ENCODE measurements at regions of chr1 and their contacts with region 1.

Region 1: DNA sequence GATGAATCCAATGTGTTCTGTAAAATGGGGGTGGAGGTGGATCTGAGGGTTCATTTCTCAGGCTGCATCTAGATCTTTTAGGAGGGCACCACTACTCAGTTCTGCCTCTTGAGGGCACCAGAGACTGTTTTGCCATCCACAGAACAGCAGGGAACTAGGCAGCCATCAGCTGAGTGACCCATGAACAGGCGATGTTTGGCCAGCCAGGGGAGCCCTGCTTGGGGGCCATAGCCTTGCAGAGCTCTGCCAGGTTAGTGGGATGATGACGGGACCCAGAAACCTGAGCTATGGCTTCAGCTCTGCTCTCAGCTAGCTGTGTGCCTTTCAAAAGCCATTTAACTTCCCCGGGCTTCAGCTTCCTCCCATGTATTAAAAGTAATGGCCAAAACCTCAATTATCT is 13.4 kb upstream of the NOS1AP start:
- DNase-seq: peak; percentile 85
- ATAC-seq: peak; percentile 99
- H3K4me3 Mint-ChIP-seq: no peak overlapping the region
- H3K27ac Mint-ChIP-seq: no peak overlapping the region
- H3K4me1 Mint-ChIP-seq: peaks cover 4% of the 10 kb centered on the region; the same call in 1 of the 2 replicates
- H3K27me3 Mint-ChIP-seq: peaks cover 7% of the 10 kb centered on the region; the same call in 1 of the 2 replicates
- CTCF ChIP-seq: peak; percentile 75

Region 2: DNA sequence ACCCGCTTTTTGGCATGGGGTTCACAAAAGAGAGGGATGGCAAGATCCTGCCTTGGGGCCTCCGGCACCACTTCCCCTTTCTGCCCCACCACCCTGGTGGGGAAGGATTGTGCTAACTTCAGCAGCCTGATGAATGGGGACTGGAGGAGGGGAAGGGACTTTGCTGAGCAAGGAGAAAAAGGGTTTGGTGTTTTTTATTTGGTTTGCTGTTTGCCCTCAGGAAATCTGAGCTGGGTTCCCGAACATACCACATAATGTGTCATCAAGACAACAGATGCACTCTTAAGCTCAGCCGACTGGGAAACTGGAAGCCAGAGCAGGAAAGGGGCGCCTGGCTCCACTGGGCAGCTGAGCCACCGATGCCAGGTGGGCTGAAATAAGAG is 52.2 kb before region 1 on chr1:
- CTCF ChIA-PET with region 1: no interaction called
- POLR2A ChIA-PET with region 1: no interaction called
- DNase-seq: no peak
- ATAC-seq: peak; percentile 47; the same call in 1 of the 2 replicates
- H3K4me3 Mint-ChIP-seq: no peak overlapping the region
- H3K27ac Mint-ChIP-seq: no peak overlapping the region
- H3K4me1 Mint-ChIP-seq: peaks cover 17% of the 10 kb centered on the region
- H3K27me3 Mint-ChIP-seq: no peaks in the 10 kb centered on the region
- CTCF ChIP-seq: no peak

Region 3: DNA sequence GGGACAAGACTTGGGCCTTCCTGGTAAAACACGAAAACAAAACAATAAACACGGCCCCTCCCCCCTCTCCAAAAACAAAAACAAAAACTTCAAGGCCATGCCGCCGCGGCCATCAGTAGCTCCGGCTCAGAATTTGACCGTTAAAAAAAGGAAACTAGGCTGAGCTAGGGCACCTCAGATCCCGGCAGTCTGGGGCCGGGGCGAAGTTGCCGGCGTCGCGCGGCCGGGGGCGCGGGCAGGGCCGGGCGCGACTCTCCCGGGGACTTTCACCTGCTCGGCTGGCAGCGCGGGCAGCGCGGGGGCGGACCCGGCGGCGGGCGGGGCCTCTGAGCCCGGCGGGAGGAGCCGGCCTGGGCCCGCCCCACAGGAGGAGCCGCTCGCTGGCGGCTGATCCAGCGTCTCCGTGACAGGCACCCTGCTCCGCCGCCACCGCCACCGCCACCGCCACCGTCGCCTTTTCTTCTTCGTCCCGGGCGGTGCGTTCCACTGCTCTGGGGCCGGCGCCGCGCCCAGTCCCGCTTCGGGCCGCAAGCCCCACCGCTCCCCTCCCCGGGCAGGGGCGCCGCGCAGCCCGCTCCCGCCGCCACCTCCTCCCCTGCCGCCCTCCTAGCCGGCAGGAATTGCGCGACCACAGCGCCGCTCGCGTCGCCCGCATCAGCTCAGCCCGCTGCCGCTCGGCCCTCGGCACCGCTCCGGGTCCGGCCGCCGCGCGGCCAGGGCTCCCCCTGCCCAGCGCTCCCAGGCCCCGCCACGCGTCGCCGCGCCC is 13.5 kb after region 1 on chr1 and contains the start of gene NOS1AP:
- CTCF ChIA-PET with region 1: interaction called, 23 read pairs
- POLR2A ChIA-PET with region 1: interaction called, 4 read pairs
- DNase-seq: peak; percentile 86
- ATAC-seq: peak; percentile 87
- H3K4me3 Mint-ChIP-seq: peak within 1 kb of the TSS; percentile 71
- H3K27ac Mint-ChIP-seq: peak within 1 kb of the TSS; percentile 49
- H3K4me1 Mint-ChIP-seq: peaks cover 47% of the 10 kb centered on the region
- H3K27me3 Mint-ChIP-seq: no peaks in the 10 kb centered on the region; the same call in none of the 2 replicates
- CTCF ChIP-seq: no peak
- total RNA-seq, gene NOS1AP: 10.0 to 14.7 TPM (median 10.2 TPM) in 3 replicates

Region 4: GRCh38 chr1:162213281-162213912 is 157.4 kb after region 1 on chr1:
- CTCF ChIA-PET with region 1: interaction called, 15 read pairs
- POLR2A ChIA-PET with region 1: no interaction called
- DNase-seq: no peak
- ATAC-seq: peak; percentile 22
- H3K4me3 Mint-ChIP-seq: no peak overlapping the region
- H3K27ac Mint-ChIP-seq: peak overlapping the region; percentile 65; the same call in 1 of the 2 replicates
- H3K4me1 Mint-ChIP-seq: peaks cover 69% of the 10 kb centered on the region
- H3K27me3 Mint-ChIP-seq: no peaks in the 10 kb centered on the region
- CTCF ChIP-seq: no peak

Region 5: DNA sequence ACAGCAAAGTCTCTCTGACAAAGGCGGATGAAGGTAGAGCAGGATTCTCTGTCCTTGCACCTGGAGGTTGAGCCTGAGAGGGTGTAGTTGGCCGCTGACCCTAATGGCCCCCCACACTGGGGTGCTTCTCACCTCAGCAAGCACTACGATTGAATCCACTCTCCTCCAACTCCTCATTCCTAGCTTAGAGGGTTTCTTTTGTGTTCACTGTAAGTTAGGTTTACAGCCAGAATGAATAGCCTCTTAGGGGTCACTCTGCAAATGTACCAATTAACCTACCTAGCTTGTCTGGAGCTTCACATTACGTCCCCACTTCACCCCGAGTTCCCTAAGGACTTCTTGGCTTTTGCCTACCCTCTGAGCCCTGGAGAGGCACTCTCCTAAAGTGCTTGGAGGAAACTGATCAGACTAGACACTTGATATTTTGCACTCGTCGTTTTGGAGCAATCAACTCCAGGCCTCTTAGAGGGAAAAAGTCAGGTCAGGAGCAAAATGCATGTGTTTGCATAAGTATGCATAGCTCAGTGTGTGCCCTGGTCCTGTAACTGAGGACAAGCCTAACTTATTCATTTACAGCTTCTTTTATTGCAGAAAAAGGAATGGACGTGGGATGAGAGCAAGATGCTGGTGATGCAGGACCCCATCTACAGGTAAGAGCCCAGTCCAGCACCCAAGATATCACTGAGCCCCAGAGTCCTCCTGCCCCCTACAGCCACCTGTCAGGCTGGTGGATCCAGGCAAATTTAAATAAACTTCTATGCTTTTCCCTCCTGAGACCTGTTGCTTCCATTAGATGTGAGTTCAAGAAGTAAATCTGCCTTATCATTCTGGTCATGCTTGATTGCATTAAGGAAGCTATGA is 244.2 kb after region 1 on chr1:
- CTCF ChIA-PET with region 1: interaction called, 20 read pairs
- POLR2A ChIA-PET with region 1: no interaction called
- DNase-seq: no peak
- ATAC-seq: peak; percentile 90
- H3K4me3 Mint-ChIP-seq: no peak overlapping the region
- H3K27ac Mint-ChIP-seq: peak overlapping the region; percentile 25
- H3K4me1 Mint-ChIP-seq: peaks cover 19% of the 10 kb centered on the region
- H3K27me3 Mint-ChIP-seq: no peaks in the 10 kb centered on the region
- CTCF ChIP-seq: no peak

Region 6: GRCh38 chr1:162391790-162392563 is 335.9 kb after region 1 on chr1:
- CTCF ChIA-PET with region 1: interaction called, 50 read pairs
- POLR2A ChIA-PET with region 1: no interaction called
- DNase-seq: no peak
- ATAC-seq: peak; percentile 38
- H3K4me3 Mint-ChIP-seq: no peak overlapping the region
- H3K27ac Mint-ChIP-seq: 0 out of 2 replicates have a peak overlapping the region, but pooled peaks have one; percentile 57
- H3K4me1 Mint-ChIP-seq: peaks cover 23% of the 10 kb centered on the region
- H3K27me3 Mint-ChIP-seq: no peaks in the 10 kb centered on the region
- CTCF ChIP-seq: peak; percentile 75